Astrocyte of the cerebellum (primary cell): ENCODE measurements at regions of chr3 and their contacts with region 1.

Region 1: GRCh38 chr3:98022978-98023820 is 11.9 kb downstream of the GABRR3 start:
- DNase-seq: peak; percentile 59
- H3K4me3 ChIP-seq: no peak overlapping the region
- CTCF ChIP-seq: peak; percentile 88

Region 2: DNA sequence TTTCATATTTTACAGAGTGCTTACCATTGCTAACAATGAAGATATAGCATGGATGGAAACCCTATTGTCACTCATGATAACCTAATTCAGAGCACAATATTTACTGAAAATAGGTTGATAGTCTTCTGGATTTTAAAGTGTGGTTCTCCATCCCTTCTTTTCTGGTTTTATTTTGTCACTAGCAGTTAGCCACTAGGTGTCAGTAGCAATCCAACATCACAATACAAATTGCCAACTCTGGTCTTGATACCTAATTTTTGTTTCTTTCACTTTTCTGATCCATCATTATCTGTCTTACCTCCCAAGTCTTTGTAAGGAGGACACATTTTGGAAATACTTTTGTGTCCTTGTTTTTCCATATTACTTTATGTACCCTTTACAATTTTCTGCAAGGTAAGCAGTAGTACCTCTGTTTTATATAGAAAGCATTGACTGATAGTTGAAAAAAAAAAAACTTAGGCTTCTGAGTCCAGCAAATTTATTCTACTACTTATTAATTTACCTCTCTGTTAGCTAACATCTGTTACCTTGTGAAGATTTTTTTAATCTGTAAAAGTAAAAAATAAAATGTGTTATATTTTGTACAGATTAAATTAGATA is 229.7 kb before region 1 on chr3:
- in situ Hi-C with region 1: loop called (anchors 10 kb)
- DNase-seq: peak; percentile 59
- H3K4me3 ChIP-seq: no peak overlapping the region
- CTCF ChIP-seq: peak; percentile 57

Region 3: DNA sequence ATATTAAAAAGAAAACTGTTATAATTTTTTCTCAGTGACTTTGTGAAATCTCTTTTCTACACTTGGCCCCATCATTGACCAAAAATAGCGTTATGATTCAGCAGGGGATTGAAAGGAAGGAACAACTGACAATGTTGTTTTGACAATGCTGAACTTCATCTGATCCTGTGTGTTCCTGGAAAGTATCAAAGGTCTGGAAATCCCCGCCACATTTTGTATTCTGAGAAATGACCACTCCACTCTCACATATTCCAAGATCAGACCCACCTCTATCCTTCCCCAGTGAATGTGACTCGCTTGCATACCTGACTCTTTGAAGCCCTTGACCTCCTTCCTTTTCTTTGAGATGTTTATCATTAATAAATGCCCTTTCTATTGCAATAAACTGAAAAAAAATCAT is 41.3 kb before region 1 on chr3:
- in situ Hi-C with region 1: loop called (anchors 5 kb)
- DNase-seq: no peak
- H3K4me3 ChIP-seq: no peak overlapping the region
- CTCF ChIP-seq: no peak

Region 4: DNA sequence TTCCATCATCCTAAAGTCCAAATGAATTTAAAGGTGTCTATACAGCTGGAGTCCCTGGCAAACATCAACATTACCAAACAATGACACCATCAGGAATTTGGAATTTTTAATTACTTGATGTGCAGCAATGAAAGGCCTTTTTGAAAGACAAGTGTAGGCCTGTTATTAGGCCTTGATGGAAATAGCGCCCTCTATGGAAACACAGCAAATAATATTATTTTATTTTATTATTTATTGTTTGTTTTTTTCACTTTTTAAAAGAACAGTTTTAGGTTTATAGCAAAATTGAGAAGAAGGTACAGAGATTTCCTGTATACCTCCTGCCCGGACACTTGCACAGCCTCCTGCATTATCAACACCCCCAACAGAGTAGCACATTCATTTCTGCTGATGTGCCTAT is 45.6 kb after region 1 on chr3:
- in situ Hi-C with region 1: no loop called
- DNase-seq: no peak
- H3K4me3 ChIP-seq: no peak overlapping the region
- CTCF ChIP-seq: no peak